ENCODE measurements at regions of chr16 and their contacts with region 1.

Region 1: GRCh38 chr16:67521095-67521804 is 7.4 kb upstream of the RIPOR1 start:
- DNase-seq: peak; percentile 98

Region 2: DNA sequence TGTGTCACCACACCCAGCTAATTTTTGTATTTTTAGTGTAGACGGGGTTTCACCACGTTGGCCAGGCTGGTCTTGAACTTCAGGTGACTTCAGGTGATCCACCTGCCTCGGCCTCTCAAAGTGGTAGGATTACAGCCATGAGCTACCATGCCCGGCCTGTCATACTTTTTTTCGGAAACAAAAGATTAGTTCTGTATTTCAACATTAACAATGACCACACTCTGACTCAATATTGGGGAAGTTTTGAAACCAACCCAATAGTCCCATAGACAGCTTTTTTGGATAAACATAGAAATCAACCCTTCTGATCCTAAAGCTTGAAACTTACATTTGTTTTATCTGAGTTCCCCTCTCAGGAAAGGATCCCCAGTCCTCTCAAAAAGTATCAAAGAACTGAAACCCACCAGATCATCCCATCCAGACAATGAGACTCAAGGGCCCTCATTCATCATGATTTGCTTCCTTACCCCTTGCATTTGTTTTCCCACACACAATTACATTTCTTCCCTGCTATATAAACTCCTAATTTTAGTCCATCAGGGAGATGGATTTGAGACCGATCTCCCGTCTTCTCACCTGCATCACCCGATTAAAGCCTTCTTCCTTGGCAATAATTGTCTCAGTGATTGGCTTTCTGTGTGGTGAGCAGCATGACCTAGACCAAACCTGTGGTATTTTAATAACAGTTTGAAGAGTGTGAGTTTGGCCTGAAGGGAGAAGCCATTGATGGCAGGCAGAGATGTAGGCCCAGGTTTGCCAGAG is 30.7 kb before region 1 on chr16:
- intact Hi-C with region 1: loop called in 1 of 2 experiments (anchors 2 kb)
- DNase-seq: no peak

Region 3: GRCh38 chr16:67555795-67556212 is 34.6 kb after region 1 on chr16:
- intact Hi-C with region 1: no loop called
- DNase-seq: no peak

Region 4: DNA sequence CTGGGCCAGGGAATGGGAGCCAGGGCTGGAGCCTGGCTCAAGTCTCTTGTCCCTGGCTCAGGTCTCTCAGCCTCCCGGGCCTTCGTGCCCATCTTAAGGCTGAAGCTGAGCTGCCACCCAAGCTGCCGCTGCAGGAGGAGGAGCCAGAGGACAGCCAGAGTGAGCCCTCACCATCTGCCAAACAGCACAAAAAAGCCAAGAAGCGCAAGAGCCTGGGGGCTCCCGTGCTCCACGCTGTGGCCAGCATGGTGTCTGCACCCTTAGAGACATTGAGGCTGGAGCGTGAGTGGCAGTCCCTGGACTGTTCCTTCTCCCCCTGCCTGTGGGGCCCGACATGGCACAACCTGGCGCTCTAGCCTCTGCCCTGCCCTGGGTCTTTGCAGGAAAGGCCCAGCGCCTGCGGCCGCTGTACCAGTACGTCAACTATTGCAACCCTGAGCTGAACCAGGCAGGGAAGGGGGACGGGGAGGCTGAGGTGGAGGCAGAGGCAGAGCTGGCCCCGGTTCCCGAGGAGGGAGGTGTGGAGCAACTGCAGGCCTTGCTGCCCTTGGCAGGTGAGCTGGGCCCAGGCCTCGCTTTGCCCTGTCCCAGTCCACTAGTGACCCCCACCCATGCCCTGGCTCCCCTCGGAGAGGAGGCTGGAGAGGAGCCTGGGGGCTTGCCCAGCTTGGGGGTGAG is 146.7 kb after region 1 on chr16:
- intact Hi-C with region 1: loop called (anchors 1 to 5 kb)
- DNase-seq: peak; percentile 94